Transverse colon (tissue), 4 donors: ENCODE measurements at regions of chr6 and their contacts with region 1.

Region 1: DNA sequence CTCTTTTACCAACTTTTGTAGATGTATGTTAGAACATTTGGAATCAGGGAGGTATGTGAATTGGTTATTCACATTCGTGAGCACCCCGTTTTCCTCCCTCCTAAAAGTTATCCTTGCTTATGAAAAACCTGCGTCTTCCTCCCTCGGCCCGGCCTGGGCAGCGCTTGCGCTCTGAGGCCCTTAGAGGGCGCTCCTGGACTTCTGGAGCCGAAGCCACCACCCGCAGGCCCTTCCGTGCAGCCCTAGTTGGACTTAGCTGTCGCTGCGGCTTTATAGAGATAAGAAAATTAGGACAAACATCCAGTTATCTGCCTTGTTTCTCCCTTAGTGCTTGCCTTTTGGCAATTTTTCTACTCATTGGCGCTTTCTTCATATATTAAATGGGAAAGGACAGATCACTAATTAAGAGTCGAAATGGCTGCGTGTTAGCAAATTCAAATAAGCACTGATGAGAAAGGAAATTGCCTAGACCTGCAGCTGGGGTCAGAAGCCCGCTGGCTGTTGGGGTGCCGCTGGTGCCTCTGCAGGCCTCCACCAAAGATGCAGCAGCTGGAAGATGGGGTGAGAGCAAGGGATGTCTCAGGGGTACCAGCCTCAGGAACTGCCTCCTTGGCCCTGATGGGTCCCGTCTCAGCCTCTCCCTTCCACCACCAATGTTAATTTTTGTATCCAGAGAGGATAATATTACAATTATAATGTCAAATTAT is 5.2 kb downstream of the FNDC1 start:
- DNase-seq: peak; percentile 66
- H3K4me3 ChIP-seq: no peak overlapping the region
- H3K27ac ChIP-seq: no peak overlapping the region
- H3K4me1 ChIP-seq: peaks cover 0 to 12% (median 6%) of the 10 kb centered on the region in 4 donors
- H3K27me3 ChIP-seq: peaks cover 53% of the 10 kb centered on the region
- CTCF ChIP-seq: peak; percentile 56 to 88 (median 85)
- EP300 ChIP-seq: no peak
- POLR2A ChIP-seq: no peak

Region 2: GRCh38 chr6:158958504-158959386 is 215.7 kb before region 1 on chr6:
- in situ Hi-C with region 1: no loop called
- intact Hi-C with region 1: no loop called
- DNase-seq: peak; percentile 21
- H3K4me3 ChIP-seq: no peak overlapping the region
- H3K27ac ChIP-seq: peak overlapping the region in 1 of 4 donors; percentile 23
- H3K4me1 ChIP-seq: peaks cover 0 to 7% (median 2%) of the 10 kb centered on the region in 4 donors
- H3K27me3 ChIP-seq: no peaks in the 10 kb centered on the region
- CTCF ChIP-seq: peak in 1 of 5 experiments; percentile 17
- EP300 ChIP-seq: no peak
- POLR2A ChIP-seq: no peak

Region 3: GRCh38 chr6:159646733-159647132 is 472.3 kb after region 1 on chr6:
- in situ Hi-C with region 1: loop called in 2 of 4 experiments (anchors 10 kb)
- intact Hi-C with region 1: no loop called
- DNase-seq: no peak
- H3K4me3 ChIP-seq: no peak overlapping the region
- H3K27ac ChIP-seq: no peak overlapping the region
- H3K4me1 ChIP-seq: no peaks in the 10 kb centered on the region
- H3K27me3 ChIP-seq: no peaks in the 10 kb centered on the region
- CTCF ChIP-seq: no peak
- EP300 ChIP-seq: no peak
- POLR2A ChIP-seq: no peak

Region 4: GRCh38 chr6:159654483-159655098 is 480.2 kb after region 1 on chr6:
- in situ Hi-C with region 1: loop called in 2 of 4 experiments (anchors 10 kb)
- intact Hi-C with region 1: loop called (anchors 1 kb)
- DNase-seq: no peak
- H3K4me3 ChIP-seq: no peak overlapping the region
- H3K27ac ChIP-seq: no peak overlapping the region
- H3K4me1 ChIP-seq: peaks cover 0 to 6% (median 0%) of the 10 kb centered on the region in 4 donors
- H3K27me3 ChIP-seq: no peaks in the 10 kb centered on the region
- CTCF ChIP-seq: peak; percentile 54 to 69 (median 65)
- EP300 ChIP-seq: no peak
- POLR2A ChIP-seq: no peak

Region 5: GRCh38 chr6:159941286-159942113 is 767.1 kb after region 1 on chr6:
- in situ Hi-C with region 1: loop called in 1 of 4 experiments (anchors 25 kb)
- intact Hi-C with region 1: no loop called
- DNase-seq: no peak
- H3K4me3 ChIP-seq: no peak overlapping the region
- H3K27ac ChIP-seq: no peak overlapping the region
- H3K4me1 ChIP-seq: no peaks in the 10 kb centered on the region
- H3K27me3 ChIP-seq: no peaks in the 10 kb centered on the region
- CTCF ChIP-seq: peak in 4 of 5 experiments; percentile 18 to 30 (median 25)
- EP300 ChIP-seq: no peak
- POLR2A ChIP-seq: no peak